ENCODE measurements at regions of chr3 and their contacts with region 1.

Region 1: DNA sequence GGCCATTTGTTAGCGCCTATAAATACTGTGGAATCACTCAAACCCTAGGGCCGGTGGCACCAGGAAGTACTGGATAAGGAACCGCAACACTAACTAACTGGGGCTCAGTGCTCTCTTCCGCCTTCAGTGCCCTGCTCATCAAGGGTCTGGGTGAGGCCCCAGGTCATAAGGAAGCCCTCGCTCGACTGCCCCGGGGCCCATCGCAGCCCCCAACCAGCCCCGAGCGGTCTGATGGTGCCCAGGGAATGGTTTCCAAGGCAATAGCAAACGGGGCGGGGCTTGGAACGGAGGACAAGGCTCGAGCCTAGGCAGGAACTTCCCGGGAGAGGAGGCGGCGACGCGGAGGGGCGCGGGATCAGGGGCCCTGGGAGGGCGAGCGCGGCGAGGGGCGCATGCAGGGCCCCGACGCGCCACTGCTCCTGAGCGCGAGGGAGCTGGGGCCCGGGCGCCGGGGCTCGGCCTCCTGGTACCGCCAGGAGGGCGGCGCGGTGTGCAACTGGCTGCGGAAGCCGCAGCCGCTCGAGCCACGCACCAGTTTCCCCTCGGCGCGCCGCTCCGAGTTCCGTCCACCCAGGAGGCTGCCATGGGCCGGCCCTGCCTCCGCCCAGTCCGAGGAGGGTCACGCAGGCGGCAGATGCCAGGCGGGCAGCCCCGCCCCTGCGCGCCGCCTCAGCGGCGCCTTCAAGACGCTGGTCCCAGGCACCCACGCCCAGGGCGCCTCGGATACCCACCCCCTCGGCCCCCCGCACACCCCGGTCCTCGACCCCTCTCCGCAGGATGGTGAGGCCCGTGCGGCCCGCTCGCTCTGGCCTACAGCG is at the start of gene TTLL3:
- DNase-seq: peak; percentile 58
- total RNA-seq, gene TTLL3: 4.2 and 4.4 TPM in 2 replicates

Region 2: GRCh38 chr3:9536212-9536611 is 273.6 kb before region 1 on chr3:
- in situ Hi-C with region 1: no loop called
- DNase-seq: no peak

Region 3: GRCh38 chr3:9951962-9952805 is 142.4 kb after region 1 on chr3 and contains the start of gene PRRT3:
- in situ Hi-C with region 1: loop called (anchors 25 kb)
- DNase-seq: no peak
- total RNA-seq, gene PRRT3: 0.34 and 0.51 TPM in 2 replicates

Measured in SK-MEL-5 (cell line).